ENCODE measurements at regions of chr9 and their contacts with region 1.

Region 1: DNA sequence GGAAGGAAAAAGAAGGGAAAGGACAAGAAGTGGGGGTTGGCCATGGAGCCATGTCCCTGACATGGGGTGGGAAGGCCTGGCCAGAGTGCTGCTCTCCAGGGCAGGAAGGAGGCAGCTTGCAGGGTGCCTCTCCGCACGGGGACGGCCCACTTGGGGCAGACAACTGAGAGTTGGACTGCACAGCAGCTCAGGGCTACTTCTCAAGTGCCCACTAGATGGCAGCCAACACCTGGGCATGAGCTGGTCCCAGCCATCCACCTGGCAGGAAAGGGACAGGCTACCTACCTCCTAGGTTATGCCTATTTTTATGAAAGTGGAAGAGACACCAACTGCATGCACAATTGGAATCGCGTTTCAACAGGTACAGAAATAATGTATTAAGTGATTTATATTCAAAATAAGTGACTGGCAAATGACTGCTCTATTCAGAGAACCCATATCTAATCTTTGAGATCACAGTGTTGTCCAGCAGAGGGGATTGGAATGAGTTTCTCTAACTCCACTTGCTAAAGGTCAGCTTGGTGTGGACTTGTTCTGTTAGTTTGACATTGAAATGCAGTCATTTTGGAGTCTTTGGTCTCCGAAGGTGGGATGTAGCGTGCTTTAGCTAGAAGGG is 113.4 kb downstream of the SYK start:
- DNase-seq: peak; percentile 74
- H3K4me3 Mint-ChIP-seq: no peak overlapping the region
- H3K27ac Mint-ChIP-seq: no peak overlapping the region
- H3K4me1 Mint-ChIP-seq: no peaks in the 10 kb centered on the region
- H3K27me3 Mint-ChIP-seq: no peaks in the 10 kb centered on the region
- CTCF ChIP-seq: peak; percentile 79

Region 2: GRCh38 chr9:91676046-91676445 is 761.1 kb after region 1 on chr9:
- CTCF ChIA-PET with region 1: interaction called, 5 read pairs
- intact Hi-C with region 1: loop called (anchors 1 kb)
- DNase-seq: peak; percentile 56
- H3K4me3 Mint-ChIP-seq: no peak overlapping the region
- H3K27ac Mint-ChIP-seq: no peak overlapping the region
- H3K4me1 Mint-ChIP-seq: no peaks in the 10 kb centered on the region
- H3K27me3 Mint-ChIP-seq: peaks cover 28% of the 10 kb centered on the region
- CTCF ChIP-seq: peak; percentile 31

Region 3: GRCh38 chr9:91727316-91727861 is 812.4 kb after region 1 on chr9:
- CTCF ChIA-PET with region 1: interaction called, 14 read pairs
- intact Hi-C with region 1: no loop called
- DNase-seq: peak; percentile 20
- H3K4me3 Mint-ChIP-seq: no peak overlapping the region
- H3K27ac Mint-ChIP-seq: no peak overlapping the region
- H3K4me1 Mint-ChIP-seq: no peaks in the 10 kb centered on the region
- H3K27me3 Mint-ChIP-seq: peaks cover 16% of the 10 kb centered on the region
- CTCF ChIP-seq: no peak